A673 (cell line): ENCODE measurements at regions of chr14 and their contacts with region 1.

Region 1: GRCh38 chr14:76375947-76376404 is at the start of gene ESRRB:
- DNase-seq: peak; percentile 74
- H3K4me3 ChIP-seq: peak within 1 kb of the TSS; percentile 48
- H3K27ac ChIP-seq: no peak within 1 kb of the TSS
- H3K4me1 ChIP-seq: peaks cover 11% of the 10 kb centered on the region
- H3K27me3 ChIP-seq: peaks cover 86% of the 10 kb centered on the region
- CTCF ChIP-seq: no peak
- total RNA-seq, gene ESRRB: 0.47 and 1.2 TPM in 2 replicates

Region 2: GRCh38 chr14:76093077-76093476 is 282.9 kb before region 1 on chr14:
- CTCF ChIA-PET with region 1: interaction called, 16 read pairs
- POLR2A ChIA-PET with region 1: no interaction called
- intact Hi-C with region 1: no loop called
- DNase-seq: no peak
- H3K4me3 ChIP-seq: no peak overlapping the region
- H3K27ac ChIP-seq: no peak overlapping the region
- H3K4me1 ChIP-seq: no peaks in the 10 kb centered on the region
- H3K27me3 ChIP-seq: no peaks in the 10 kb centered on the region
- CTCF ChIP-seq: no peak